ENCODE measurements at regions of chr12 and their contacts with region 1.

Region 1: GRCh38 chr12:6335451-6336078 is 6.3 kb downstream of the TNFRSF1A start:
- DNase-seq: peak; percentile 94
- ATAC-seq: peak; percentile 83
- H3K4me3 Mint-ChIP-seq: no peak overlapping the region
- H3K27ac Mint-ChIP-seq: no peak overlapping the region
- H3K4me1 Mint-ChIP-seq: peaks cover 21% of the 10 kb centered on the region
- H3K27me3 Mint-ChIP-seq: no peaks in the 10 kb centered on the region

Region 2: DNA sequence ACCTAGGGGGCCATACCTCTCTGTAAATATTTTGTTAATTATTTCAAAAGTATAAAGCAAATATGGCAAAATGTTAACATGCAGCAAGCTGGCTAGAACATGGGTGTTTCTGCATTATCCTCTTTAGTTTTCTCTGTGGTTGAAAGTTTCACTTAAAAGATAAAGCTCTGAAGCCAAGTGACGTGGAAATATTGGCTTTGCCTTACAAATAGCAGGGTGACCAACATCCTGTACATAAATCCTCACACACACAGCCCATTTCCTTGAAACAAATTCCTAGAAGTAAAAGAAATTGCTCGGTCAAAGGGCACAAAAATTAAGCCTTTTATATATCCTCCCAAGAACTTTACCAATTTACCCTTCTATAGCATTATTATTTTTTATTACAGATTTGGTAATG is 200.5 kb before region 1 on chr12:
- CTCF ChIA-PET with region 1: no interaction called
- POLR2A ChIA-PET with region 1: no interaction called
- intact Hi-C with region 1: no loop called
- DNase-seq: no peak
- ATAC-seq: no peak
- H3K4me3 Mint-ChIP-seq: no peak overlapping the region
- H3K27ac Mint-ChIP-seq: no peak overlapping the region
- H3K4me1 Mint-ChIP-seq: peaks cover 13% of the 10 kb centered on the region
- H3K27me3 Mint-ChIP-seq: no peaks in the 10 kb centered on the region

Region 3: DNA sequence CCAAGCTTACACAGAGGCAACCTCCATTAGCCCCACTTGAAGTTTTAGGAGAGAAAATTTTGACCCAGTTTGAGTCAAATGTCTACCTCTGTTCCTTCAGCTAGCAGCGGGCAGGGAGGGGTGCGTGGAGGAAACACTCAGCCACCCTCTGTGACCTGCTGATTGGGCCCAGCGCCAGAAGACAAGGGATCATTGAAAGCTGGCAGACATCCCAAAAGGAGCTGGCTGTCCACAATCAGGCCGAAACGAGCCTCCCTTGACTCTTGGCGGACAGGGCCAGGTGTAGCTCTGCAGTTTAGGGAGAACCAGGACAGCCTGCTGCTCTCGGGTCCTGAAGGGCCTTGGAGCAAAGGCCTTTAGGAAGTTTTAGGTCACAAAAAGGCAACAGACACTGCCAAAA is 94.1 kb before region 1 on chr12:
- CTCF ChIA-PET with region 1: no interaction called
- POLR2A ChIA-PET with region 1: no interaction called
- intact Hi-C with region 1: no loop called
- DNase-seq: no peak
- ATAC-seq: no peak
- H3K4me3 Mint-ChIP-seq: no peak overlapping the region
- H3K27ac Mint-ChIP-seq: no peak overlapping the region
- H3K4me1 Mint-ChIP-seq: no peaks in the 10 kb centered on the region
- H3K27me3 Mint-ChIP-seq: no peaks in the 10 kb centered on the region

Region 4: DNA sequence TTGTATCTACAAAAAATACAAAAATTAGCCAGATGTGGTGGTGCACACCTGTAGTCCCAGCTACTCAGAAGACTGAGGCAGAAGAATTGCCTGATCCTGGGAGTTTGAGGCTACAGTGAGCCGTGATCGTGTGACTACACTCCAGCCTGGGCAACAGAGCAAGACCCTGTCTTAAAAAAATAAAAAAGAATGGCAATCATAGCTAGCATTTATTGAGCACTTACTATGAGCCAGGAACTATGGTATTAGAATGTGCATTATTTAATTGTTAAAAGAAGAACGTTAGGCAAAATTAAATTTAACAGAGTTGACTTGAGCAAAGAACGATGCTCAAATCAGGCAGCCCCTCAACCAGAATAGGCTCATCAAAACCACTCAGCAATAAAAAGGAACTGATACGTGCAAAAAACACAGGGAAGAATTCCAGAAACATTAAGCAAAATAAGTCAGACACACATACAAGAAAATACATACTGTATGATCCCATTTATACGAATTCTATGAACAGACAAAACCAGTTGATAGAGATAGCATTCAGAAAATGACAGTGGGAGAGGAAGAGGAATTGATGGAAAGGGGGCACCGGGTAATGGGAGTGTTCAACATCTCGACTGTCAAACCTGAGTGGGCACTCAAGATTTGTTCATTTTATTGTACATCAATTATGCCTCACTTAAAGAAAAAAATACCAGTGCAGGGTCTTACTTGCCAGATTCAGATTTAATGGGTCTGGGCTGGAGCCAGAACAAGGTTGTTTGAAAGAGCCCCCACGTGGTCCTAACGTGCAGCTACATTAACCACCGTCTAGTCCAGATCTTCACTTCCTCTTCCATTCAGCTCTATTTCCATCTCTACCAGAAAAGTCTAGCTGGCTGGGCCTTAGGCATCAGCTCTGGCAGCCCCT is 31.8 kb after region 1 on chr12:
- CTCF ChIA-PET with region 1: interaction called, 13 read pairs
- POLR2A ChIA-PET with region 1: interaction called, 3 read pairs
- intact Hi-C with region 1: loop called (anchors 1 to 5 kb)
- DNase-seq: peak; percentile 60
- ATAC-seq: peak; percentile 57
- H3K4me3 Mint-ChIP-seq: no peak overlapping the region
- H3K27ac Mint-ChIP-seq: no peak overlapping the region
- H3K4me1 Mint-ChIP-seq: peaks cover 32% of the 10 kb centered on the region
- H3K27me3 Mint-ChIP-seq: no peaks in the 10 kb centered on the region

Region 5: GRCh38 chr12:6423267-6424007 is 87.9 kb after region 1 on chr12:
- CTCF ChIA-PET with region 1: no interaction called
- POLR2A ChIA-PET with region 1: no interaction called
- intact Hi-C with region 1: loop called (anchors 1 to 2 kb)
- DNase-seq: peak; percentile 86
- ATAC-seq: peak; percentile 62
- H3K4me3 Mint-ChIP-seq: peak overlapping the region; percentile 39
- H3K27ac Mint-ChIP-seq: peak overlapping the region; percentile 87
- H3K4me1 Mint-ChIP-seq: peaks cover 47% of the 10 kb centered on the region
- H3K27me3 Mint-ChIP-seq: no peaks in the 10 kb centered on the region

Region 6: DNA sequence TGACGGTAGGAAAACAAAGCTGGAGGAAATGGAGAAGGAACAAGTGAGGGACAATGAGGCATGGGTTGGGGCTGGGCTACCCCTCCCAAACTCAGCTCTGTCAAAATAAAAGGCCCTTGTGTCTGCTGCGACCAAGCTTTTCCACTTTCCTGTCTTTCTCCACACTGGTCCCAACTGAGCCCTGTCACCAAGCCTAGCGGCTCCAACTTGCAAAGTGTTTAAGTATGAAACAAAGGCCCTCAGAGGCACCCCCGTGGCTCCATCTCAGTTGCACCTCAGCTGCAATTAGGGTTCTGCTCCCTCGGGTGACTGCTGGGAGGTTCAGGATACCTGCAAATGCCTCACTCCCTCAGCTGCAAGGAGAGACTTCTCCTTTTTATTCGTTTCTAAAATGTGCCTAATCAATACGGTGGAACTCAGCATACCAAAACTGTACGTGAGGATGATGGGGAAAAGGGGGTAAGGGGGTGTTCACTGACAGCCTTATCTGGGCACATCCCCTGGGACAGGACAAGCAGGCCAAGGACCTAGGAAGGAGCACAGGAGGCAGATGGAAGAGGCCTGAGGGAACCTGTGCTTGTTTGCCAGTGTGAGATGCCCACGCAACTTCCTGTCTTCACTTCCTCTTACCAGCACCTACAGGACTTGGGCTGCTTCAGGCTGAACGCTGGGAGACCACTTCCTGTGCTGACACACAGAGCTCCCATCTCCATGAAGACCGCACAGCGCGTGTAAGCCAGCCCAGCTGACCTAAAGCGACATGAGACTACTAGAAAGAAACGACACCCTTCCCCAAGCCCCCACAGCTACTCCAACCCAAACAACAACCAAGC is 126.1 kb after region 1 on chr12:
- CTCF ChIA-PET with region 1: interaction called, 13 read pairs
- POLR2A ChIA-PET with region 1: interaction called, 4 read pairs
- intact Hi-C with region 1: loop called (anchors 2 kb)
- DNase-seq: peak; percentile 92
- ATAC-seq: peak; percentile 81
- H3K4me3 Mint-ChIP-seq: peak overlapping the region; percentile 75
- H3K27ac Mint-ChIP-seq: peak overlapping the region; percentile 100
- H3K4me1 Mint-ChIP-seq: peaks cover 86% of the 10 kb centered on the region
- H3K27me3 Mint-ChIP-seq: no peaks in the 10 kb centered on the region

Region 7: GRCh38 chr12:6493497-6494257 is 158.1 kb after region 1 on chr12 and contains the start of gene NCAPD2:
- CTCF ChIA-PET with region 1: no interaction called
- POLR2A ChIA-PET with region 1: interaction called, 4 read pairs
- intact Hi-C with region 1: loop called in 1 of 2 experiments (anchors 1 kb)
- DNase-seq: peak; percentile 98
- ATAC-seq: peak; percentile 89
- H3K4me3 Mint-ChIP-seq: peak within 1 kb of the TSS; percentile 94
- H3K27ac Mint-ChIP-seq: peak within 1 kb of the TSS; percentile 98
- H3K4me1 Mint-ChIP-seq: peaks cover 35% of the 10 kb centered on the region
- H3K27me3 Mint-ChIP-seq: no peaks in the 10 kb centered on the region
- total RNA-seq, gene NCAPD2: 199 to 210 TPM

Measured in activated CD4-positive, alpha-beta T cell treated with anti-CD3 and anti-CD28 coated beads for 36 hours (primary cell).